Heart left ventricle (tissue), 16 donors: ENCODE measurements at regions of chr15 and their contacts with region 1.

Region 1: GRCh38 chr15:101489236-101489632 is 273 bp downstream of the PCSK6 start:
- DNase-seq: peak in 3 of 5 donors; percentile 59 to 75 (median 69)
- ATAC-seq: peak in 3 of 4 donors; percentile 53 to 58 (median 56)
- H3K4me3 ChIP-seq: peak overlapping the region in 8 of 12 donors; percentile 40 to 67 (median 53)
- H3K27ac ChIP-seq: peak overlapping the region in 2 of 12 donors; percentile 9 to 47
- H3K4me1 ChIP-seq: peaks cover 0 to 20% (median 3%) of the 10 kb centered on the region in 12 donors
- H3K27me3 ChIP-seq: peaks cover 0 to 39% (median 0%) of the 10 kb centered on the region in 9 donors
- CTCF ChIP-seq: peak in 2 of 12 donors; percentile 12 to 16
- POLR2A ChIP-seq: no peak

Region 2: DNA sequence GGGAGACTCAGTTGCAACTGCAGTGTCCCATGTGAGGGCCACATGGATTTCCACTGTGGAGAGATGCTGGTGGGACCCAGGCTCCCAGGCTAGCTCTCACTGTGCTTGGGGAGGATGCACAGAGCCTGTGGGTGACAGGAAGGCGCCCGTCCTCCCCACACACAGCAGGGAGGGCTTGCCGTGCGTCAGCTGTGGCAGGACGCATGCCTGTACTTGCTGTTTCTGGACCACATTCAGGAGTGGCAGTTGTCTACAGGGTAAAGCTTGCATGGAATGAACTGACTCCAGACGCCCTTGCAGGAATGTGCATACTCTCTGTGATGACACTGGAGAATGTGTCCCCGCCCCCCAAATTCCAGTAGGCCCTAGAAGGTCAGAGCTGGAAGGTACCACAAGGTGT is 130.3 kb before region 1 on chr15:
- intact Hi-C with region 1: loop called in 3 of 10 experiments (anchors 5 to 10 kb)
- DNase-seq: peak in 3 of 5 donors; percentile 58 to 77 (median 71)
- ATAC-seq: peak; percentile 79 to 86 (median 82)
- H3K4me3 ChIP-seq: no peak overlapping the region
- H3K27ac ChIP-seq: peak overlapping the region in 7 of 12 donors; percentile 16 to 76 (median 60)
- H3K4me1 ChIP-seq: peaks cover 0 to 27% (median 7%) of the 10 kb centered on the region in 12 donors
- H3K27me3 ChIP-seq: no peaks in the 10 kb centered on the region
- CTCF ChIP-seq: no peak
- POLR2A ChIP-seq: no peak

Region 3: DNA sequence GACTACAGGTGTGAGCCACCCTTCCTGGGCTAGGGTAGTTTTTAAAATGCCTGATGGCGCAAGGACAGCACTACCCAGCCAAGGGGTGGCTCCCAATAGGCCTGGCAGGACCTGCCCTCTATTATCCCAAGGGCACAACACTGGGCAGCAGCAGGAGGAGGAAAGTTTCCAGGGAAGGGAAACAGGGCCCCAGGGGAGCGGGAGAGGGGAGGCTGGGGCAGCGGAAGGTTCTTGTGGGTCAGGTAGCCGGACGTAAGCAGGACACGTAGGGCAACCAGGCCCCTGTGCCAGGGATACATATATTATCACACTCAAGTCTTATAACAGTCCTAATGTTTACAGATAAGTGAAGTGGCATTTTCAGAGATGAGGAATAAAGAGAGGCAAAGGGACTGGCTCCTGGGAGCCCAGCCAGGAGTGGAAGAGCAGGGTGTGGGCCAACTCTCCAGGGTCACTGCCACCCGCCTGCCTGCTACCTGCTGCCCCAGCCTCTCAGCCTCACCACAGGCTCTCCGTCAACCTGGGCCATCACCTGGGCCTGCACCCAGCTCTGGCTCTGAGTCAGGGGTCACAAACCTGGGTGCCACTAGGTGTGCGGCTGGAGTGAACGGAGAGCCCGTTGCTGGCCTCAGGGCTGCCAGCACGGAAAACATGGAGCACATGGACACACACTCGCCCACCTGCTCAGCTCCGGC is 121.0 kb before region 1 on chr15:
- intact Hi-C with region 1: loop called in 3 of 10 experiments (anchors 5 to 10 kb)
- DNase-seq: peak in 4 of 5 donors; percentile 55 to 87 (median 77)
- ATAC-seq: peak; percentile 89 to 91 (median 90)
- H3K4me3 ChIP-seq: peak overlapping the region in 5 of 12 donors; percentile 7 to 34 (median 21)
- H3K27ac ChIP-seq: peak overlapping the region; percentile 27 to 94 (median 76)
- H3K4me1 ChIP-seq: peaks cover 0 to 22% (median 8%) of the 10 kb centered on the region in 12 donors
- H3K27me3 ChIP-seq: no peaks in the 10 kb centered on the region
- CTCF ChIP-seq: no peak
- POLR2A ChIP-seq: no peak

Region 4: GRCh38 chr15:101445562-101446517 is 43.4 kb before region 1 on chr15:
- intact Hi-C with region 1: loop called in 2 of 10 experiments (anchors 5 to 10 kb)
- DNase-seq: peak; percentile 69 to 88 (median 77)
- ATAC-seq: peak; percentile 67 to 84 (median 74)
- H3K4me3 ChIP-seq: no peak overlapping the region
- H3K27ac ChIP-seq: peak overlapping the region; percentile 2 to 90 (median 58)
- H3K4me1 ChIP-seq: peaks cover 0 to 48% (median 23%) of the 10 kb centered on the region in 12 donors
- H3K27me3 ChIP-seq: no peaks in the 10 kb centered on the region
- CTCF ChIP-seq: peak in 2 of 12 donors; percentile 9 to 17
- POLR2A ChIP-seq: no peak